ENCODE measurements at regions of chr4 and their contacts with region 1.

Region 1: GRCh38 chr4:114659386-114660008 is 60.9 kb downstream of the UGT8 start:
- DNase-seq: peak; percentile 16
- H3K4me3 ChIP-seq: no peak overlapping the region
- H3K27ac ChIP-seq: no peak overlapping the region
- H3K27me3 ChIP-seq: no peaks in the 10 kb centered on the region
- CTCF ChIP-seq: peak; percentile 89

Region 2: DNA sequence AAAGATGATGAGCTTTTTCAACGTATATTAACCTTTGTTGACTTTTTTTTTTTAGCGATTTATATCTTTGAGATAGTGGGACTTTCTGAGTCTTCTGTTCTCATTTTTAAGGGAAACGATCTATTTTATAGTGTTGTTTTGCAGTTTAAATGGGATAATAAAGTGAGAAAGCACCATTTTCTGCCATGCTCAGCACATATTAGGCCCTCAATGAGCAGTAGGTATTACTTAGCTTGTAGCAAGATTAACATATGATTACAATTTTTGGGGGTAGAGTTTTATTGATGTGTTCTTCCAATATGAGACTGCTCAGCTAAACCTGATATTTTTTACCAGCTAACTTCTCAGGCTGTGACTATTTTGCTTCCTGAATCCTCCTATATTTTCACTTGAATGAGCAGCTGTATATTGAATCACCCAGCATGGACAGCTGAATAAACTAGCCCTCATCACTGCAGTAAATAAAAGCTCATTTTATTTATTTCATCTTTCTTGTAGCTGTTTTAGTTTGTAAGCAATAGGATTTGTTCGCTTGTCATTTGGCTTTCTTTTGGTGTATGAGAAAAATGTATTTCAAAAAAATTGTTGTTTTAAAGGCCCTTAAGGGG is 17.2 kb before region 1 on chr4:
- CTCF ChIA-PET with region 1: interaction called, 10 read pairs
- POLR2A ChIA-PET with region 1: no interaction called
- DNase-seq: no peak
- H3K4me3 ChIP-seq: no peak overlapping the region
- H3K27ac ChIP-seq: no peak overlapping the region
- H3K27me3 ChIP-seq: no peaks in the 10 kb centered on the region
- CTCF ChIP-seq: no peak

Measured in AG04450 (cell line).